ENCODE measurements at regions of chr2 and their contacts with region 1.

Region 1: GRCh38 chr2:8681786-8682692 is at the start of gene ID2:
- DNase-seq: peak; percentile 100
- H3K4me3 Mint-ChIP-seq: peak within 1 kb of the TSS; percentile 98
- H3K27ac Mint-ChIP-seq: peak within 1 kb of the TSS; percentile 97
- H3K4me1 Mint-ChIP-seq: peaks cover 37% of the 10 kb centered on the region
- H3K27me3 Mint-ChIP-seq: peaks cover 13% of the 10 kb centered on the region
- total RNA-seq, gene ID2: 284 and 299 TPM in 2 replicates

Region 2: DNA sequence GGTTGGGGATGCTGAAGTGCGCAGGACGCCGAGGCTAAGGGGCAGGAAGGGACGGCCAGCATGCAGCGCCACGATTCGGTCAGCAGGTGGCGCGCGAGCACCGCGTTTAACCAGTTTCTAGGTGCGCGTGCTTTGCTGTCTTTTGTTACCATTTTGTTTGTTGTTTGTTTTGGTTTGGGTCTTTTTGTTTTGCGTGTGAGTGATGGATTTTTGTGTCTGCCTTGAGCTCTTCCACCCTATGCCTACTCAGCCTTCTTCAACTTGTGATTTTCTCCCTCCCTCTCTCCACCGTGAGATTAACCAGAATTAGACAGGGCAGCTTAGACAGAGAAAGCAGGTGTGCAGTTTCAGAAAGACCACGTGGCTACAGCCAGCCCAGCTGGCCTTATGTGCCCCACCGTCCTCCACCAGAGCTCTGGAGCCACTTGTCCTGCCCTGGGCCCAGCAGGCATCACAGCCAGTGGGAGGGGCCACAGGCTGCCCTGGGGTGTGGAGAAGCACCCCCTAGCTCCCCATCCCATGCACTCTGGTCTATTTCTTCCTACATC is 1584.6 kb before region 1 on chr2:
- intact Hi-C with region 1: loop called (anchors 2 kb)
- DNase-seq: peak; percentile 93
- H3K4me3 Mint-ChIP-seq: peak overlapping the region; percentile 64
- H3K27ac Mint-ChIP-seq: no peak overlapping the region
- H3K4me1 Mint-ChIP-seq: peaks cover 7% of the 10 kb centered on the region
- H3K27me3 Mint-ChIP-seq: no peaks in the 10 kb centered on the region

Region 3: DNA sequence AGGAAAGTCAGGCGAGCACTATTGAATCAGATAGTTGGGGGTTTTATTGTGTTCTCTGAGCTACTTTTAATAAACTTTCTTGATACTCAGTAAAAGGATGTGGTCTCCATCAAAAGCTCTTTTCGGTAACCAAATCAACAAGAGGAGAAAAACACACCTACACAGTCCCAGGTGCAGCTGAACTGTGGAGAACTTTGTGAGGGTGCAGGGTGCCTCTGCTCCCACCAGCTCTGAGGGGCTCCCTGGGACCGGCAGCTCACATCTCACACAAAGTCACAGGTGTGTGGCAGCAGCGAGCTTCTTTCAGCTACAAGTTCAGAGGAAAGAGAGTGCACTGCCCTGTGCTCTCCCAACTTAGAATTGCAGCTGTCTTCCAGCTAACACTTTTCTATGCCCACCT is 1114.4 kb before region 1 on chr2:
- intact Hi-C with region 1: loop called (anchors 2 kb)
- DNase-seq: peak; percentile 89
- H3K4me3 Mint-ChIP-seq: peak overlapping the region; percentile 65
- H3K27ac Mint-ChIP-seq: peak overlapping the region; percentile 97
- H3K4me1 Mint-ChIP-seq: peaks cover 58% of the 10 kb centered on the region
- H3K27me3 Mint-ChIP-seq: no peaks in the 10 kb centered on the region

Region 4: GRCh38 chr2:7825591-7826312 is 856.3 kb before region 1 on chr2:
- intact Hi-C with region 1: loop called (anchors 1 kb)
- DNase-seq: peak; percentile 83
- H3K4me3 Mint-ChIP-seq: peak overlapping the region; percentile 47
- H3K27ac Mint-ChIP-seq: peak overlapping the region; percentile 96
- H3K4me1 Mint-ChIP-seq: peaks cover 28% of the 10 kb centered on the region
- H3K27me3 Mint-ChIP-seq: no peaks in the 10 kb centered on the region

Region 5: DNA sequence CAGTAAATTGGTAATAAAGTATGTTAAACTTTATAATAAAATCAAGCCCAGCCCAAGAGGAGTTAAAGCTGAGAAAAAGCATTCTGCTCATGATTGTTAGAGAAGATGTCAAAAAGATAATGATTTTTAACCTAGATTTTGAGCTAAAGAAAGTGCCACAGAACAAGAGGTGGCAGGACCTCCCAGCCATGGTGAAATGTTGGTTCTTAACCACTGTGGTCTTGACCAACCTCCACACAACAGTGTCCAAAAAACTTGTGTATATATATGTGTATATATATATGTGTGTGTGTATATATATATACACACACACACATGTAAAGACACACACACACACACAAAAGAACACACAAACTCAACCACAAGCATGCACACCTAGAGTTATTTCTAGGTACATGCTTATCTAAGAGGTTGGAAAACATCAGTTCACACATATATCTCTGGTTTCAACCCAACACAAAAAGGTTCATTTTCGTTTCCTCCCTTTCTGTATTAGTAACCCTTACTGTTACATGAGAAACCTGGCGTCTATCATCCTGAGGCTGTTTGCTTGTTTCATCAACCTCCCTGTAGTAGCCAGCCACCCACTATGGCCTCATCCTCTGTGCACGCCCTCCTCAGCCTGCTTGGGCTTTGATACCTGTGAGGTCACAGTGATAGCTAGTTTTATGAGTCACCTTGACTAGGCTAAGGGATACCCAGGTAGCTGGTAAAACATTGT is 632.0 kb before region 1 on chr2:
- intact Hi-C with region 1: loop called (anchors 2 kb)
- DNase-seq: peak; percentile 81
- H3K4me3 Mint-ChIP-seq: peak overlapping the region; percentile 7
- H3K27ac Mint-ChIP-seq: peak overlapping the region; percentile 84
- H3K4me1 Mint-ChIP-seq: peaks cover 23% of the 10 kb centered on the region
- H3K27me3 Mint-ChIP-seq: no peaks in the 10 kb centered on the region

Region 6: GRCh38 chr2:8193686-8194615 is 488.1 kb before region 1 on chr2:
- intact Hi-C with region 1: no loop called
- DNase-seq: no peak
- H3K4me3 Mint-ChIP-seq: no peak overlapping the region
- H3K27ac Mint-ChIP-seq: no peak overlapping the region
- H3K4me1 Mint-ChIP-seq: no peaks in the 10 kb centered on the region
- H3K27me3 Mint-ChIP-seq: peaks cover 11% of the 10 kb centered on the region

Region 7: GRCh38 chr2:8312861-8313830 is 368.9 kb before region 1 on chr2:
- intact Hi-C with region 1: loop called (anchors 2 kb)
- DNase-seq: peak; percentile 67
- H3K4me3 Mint-ChIP-seq: peak overlapping the region; percentile 49
- H3K27ac Mint-ChIP-seq: peak overlapping the region; percentile 67
- H3K4me1 Mint-ChIP-seq: peaks cover 63% of the 10 kb centered on the region
- H3K27me3 Mint-ChIP-seq: peaks cover 9% of the 10 kb centered on the region

Region 8: DNA sequence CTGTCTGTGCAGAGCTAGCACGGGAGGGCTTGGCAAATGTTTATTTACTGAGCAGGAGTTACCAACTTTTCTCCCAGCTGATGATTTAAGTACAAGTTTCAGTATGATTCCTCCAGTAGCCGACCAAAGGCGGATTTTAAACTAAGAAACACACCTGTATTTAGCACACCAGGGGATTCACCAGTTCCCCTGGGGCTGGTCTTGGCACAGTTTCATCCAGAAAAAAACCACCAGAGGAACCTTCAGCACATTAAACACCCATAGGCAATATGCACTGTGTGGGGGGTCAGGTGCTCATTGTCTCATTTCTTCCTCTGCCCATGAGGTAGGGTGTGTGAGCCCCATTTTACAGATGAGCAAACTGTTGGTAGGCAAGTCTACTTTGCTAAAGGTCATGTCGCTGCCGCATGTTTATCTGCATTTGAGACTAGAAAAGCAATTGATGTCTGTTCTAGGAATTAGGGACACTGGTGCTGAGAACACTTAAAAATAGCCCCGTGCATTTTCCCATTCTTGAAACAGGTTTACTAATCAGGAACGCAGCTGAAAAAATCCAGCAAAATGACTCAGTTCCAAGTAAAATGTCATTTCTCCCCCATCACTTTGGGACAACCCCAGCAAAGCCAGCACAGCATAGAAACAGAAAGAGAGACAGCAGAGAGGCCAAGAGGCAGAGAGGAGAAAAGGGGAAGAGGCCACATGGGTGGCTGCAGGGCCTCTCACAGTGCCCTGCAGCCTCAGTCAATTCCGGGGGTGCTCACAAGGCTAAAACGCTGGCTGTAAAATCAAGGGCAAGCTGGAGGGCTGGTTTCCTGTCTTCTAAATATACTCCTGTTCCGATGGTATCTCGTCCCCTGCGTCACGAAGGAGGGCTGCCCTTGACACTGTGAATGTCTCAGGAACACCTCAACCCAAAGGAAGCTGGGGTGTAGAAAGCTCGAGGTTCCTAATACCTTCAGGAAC is 167.0 kb before region 1 on chr2:
- intact Hi-C with region 1: loop called (anchors 1 kb)
- DNase-seq: peak; percentile 87
- H3K4me3 Mint-ChIP-seq: peak overlapping the region; percentile 58
- H3K27ac Mint-ChIP-seq: peak overlapping the region; percentile 96
- H3K4me1 Mint-ChIP-seq: peaks cover 63% of the 10 kb centered on the region
- H3K27me3 Mint-ChIP-seq: no peaks in the 10 kb centered on the region

Region 9: GRCh38 chr2:9708683-9709538 is 1026.9 kb after region 1 on chr2:
- intact Hi-C with region 1: no loop called
- DNase-seq: no peak
- H3K4me3 Mint-ChIP-seq: peak overlapping the region; percentile 17
- H3K27ac Mint-ChIP-seq: peak overlapping the region; percentile 91
- H3K4me1 Mint-ChIP-seq: peaks cover 51% of the 10 kb centered on the region
- H3K27me3 Mint-ChIP-seq: no peaks in the 10 kb centered on the region